ENCODE measurements at regions of chr9 and their contacts with region 1.

Region 1: DNA sequence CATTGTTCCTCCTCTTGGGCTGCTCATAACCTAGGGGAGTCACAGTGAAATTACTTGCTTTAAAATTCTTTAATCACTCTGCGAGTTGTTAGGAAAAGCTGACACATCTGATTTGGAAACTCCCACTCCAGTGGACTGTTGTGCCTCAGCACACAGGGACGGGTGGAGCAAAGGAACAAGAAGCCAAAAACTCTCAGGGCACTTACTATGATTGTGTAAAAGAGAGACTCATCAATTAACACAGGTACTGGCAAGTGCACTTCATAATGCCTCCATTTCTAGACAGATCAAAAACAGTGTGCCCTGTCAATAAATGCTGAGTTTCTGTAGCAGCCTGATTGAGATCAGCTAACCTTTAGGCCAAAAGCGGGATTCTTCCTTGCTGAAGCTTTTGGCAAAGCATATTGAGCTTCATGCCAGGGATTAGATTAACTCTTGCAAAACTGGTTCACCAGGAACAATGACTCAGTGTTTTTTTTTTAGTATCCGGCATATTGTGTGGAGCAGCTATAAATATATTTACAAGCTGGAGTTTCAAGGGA is 55.9 kb downstream of the TMC1 start:
- DNase-seq: peak in 1 of 2 donors; percentile 41
- ATAC-seq: peak; percentile 63 to 88 (median 78)
- H3K4me3 ChIP-seq: peak overlapping the region in 6 of 10 donors; percentile 2 to 47 (median 26)
- H3K27ac ChIP-seq: peak overlapping the region in 9 of 10 donors; percentile 37 to 87 (median 76)
- H3K4me1 ChIP-seq: peaks cover 0 to 58% (median 40%) of the 10 kb centered on the region in 9 donors
- H3K27me3 ChIP-seq: no peaks in the 10 kb centered on the region
- CTCF ChIP-seq: no peak

Region 2: GRCh38 chr9:72305102-72305546 is 272.2 kb before region 1 on chr9:
- intact Hi-C with region 1: loop called in 1 of 10 experiments (anchors 5 kb)
- DNase-seq: peak; percentile 78 to 91
- ATAC-seq: peak; percentile 97 to 100 (median 100)
- H3K4me3 ChIP-seq: peak overlapping the region in 7 of 10 donors; percentile 18 to 55 (median 51)
- H3K27ac ChIP-seq: peak overlapping the region in 9 of 10 donors; percentile 8 to 96 (median 87)
- H3K4me1 ChIP-seq: peaks cover 0 to 60% (median 6%) of the 10 kb centered on the region in 9 donors
- H3K27me3 ChIP-seq: no peaks in the 10 kb centered on the region
- CTCF ChIP-seq: no peak

Region 3: GRCh38 chr9:72476617-72477375 is 100.5 kb before region 1 on chr9:
- intact Hi-C with region 1: loop called in 1 of 10 experiments (anchors 5 kb)
- DNase-seq: no peak
- ATAC-seq: no peak
- H3K4me3 ChIP-seq: no peak overlapping the region
- H3K27ac ChIP-seq: no peak overlapping the region
- H3K4me1 ChIP-seq: peaks cover 0 to 30% (median 13%) of the 10 kb centered on the region in 9 donors
- H3K27me3 ChIP-seq: no peaks in the 10 kb centered on the region
- CTCF ChIP-seq: no peak

Region 4: DNA sequence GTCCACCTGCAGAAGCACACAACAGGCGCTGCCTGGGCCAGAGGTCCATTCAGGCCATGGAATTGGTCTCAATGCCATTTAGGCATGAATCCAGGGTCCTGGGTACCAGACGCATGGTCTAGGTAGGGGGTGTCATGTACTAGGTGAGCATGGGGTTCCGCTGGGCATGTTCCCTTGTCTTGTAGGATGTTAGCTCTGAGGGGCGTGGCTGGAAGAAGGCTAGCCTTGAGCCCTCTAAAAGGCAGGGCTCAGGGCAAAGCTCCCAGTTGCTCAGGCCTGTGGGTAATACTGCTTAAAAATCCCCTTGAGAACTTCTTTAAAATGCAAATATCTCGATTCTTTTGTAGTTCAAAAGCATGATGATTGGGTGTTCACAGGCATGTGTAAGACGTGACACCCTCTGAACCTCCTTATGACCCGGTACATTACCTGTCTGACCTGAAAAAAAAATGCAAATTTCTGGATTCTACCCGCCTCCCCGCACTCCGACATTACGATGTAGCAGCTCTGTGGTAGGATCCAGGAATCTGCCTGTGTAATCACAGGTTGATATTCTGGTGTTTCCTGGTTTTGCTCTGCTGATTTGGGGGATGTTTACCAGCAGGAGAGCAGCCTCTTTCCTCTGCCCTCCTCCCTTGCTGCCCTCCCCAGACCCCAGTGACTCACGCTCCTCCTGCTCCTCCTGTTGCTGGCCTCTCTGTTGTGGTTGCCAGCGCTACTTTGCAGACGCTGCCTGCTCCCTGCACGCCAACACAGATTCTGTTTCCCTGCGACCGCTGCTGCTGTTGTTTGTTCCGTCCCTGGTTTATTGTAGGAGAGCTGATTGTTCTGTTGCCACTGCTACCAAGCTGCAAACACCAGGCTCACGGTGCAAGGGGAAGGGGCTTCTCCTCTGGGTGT is 50.1 kb before region 1 on chr9:
- intact Hi-C with region 1: loop called in 4 of 10 experiments (anchors 5 to 10 kb)
- DNase-seq: peak; percentile 61 to 63
- ATAC-seq: peak; percentile 83 to 97 (median 92)
- H3K4me3 ChIP-seq: peak overlapping the region in 9 of 10 donors; percentile 11 to 40 (median 27)
- H3K27ac ChIP-seq: peak overlapping the region in 7 of 10 donors; percentile 6 to 80 (median 67)
- H3K4me1 ChIP-seq: peaks cover 0 to 36% (median 18%) of the 10 kb centered on the region in 9 donors
- H3K27me3 ChIP-seq: no peaks in the 10 kb centered on the region
- CTCF ChIP-seq: peak in 1 of 9 donors; percentile 9

Region 5: GRCh38 chr9:72623156-72623555 is 45.9 kb after region 1 on chr9:
- intact Hi-C with region 1: no loop called
- DNase-seq: no peak
- ATAC-seq: no peak
- H3K4me3 ChIP-seq: no peak overlapping the region
- H3K27ac ChIP-seq: no peak overlapping the region
- H3K4me1 ChIP-seq: no peaks in the 10 kb centered on the region
- H3K27me3 ChIP-seq: no peaks in the 10 kb centered on the region
- CTCF ChIP-seq: no peak

Region 6: GRCh38 chr9:72807765-72808445 is 230.6 kb after region 1 on chr9:
- intact Hi-C with region 1: no loop called
- DNase-seq: no peak
- ATAC-seq: no peak
- H3K4me3 ChIP-seq: no peak overlapping the region
- H3K27ac ChIP-seq: no peak overlapping the region
- H3K4me1 ChIP-seq: no peaks in the 10 kb centered on the region
- H3K27me3 ChIP-seq: no peaks in the 10 kb centered on the region
- CTCF ChIP-seq: peak in 3 of 9 donors; percentile 11 to 14 (median 12)

Measured in heart right ventricle (tissue), 16 donors.